Esophagus muscularis mucosa (tissue), 4 donors: ENCODE measurements at regions of chr3 and their contacts with region 1.

Region 1: DNA sequence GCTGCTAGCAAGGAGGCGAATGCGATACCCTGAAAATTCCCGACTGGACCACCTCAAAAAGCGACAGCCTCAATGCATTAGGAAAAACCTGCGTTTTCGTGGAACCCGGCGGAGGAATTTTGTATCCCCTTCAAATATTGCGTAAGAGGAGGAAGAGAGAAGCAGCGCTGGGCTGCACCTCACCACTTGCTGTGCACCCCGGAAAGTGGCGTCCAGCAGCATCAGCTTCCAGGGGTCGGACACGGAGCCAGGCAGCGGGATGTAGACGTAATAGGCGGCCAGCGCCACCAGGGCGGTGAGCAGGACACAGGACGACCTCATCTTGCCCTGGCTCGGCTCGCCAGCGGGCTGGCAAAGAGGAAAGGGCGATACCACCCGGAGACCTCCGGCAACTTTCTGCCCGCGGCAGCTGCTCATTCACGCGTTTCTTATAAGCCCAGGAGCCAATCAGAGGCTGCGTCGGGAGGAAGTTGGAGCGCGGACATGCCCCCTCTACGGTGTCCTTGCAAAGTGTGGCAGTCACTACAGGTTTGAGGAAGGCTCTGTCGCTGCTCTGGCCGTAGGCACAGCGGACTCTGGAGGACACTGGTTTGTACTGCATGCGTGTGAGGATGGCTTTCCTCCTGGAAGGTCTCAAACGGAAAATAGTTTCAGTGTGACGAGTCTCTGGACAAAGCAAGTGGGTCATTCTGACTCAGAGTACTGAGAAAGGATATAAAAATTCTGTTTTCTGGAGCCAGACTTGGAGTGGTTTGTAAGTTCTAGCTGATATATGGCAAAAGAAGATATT is at the start of gene NCEH1:
- DNase-seq: peak; percentile 96
- H3K4me3 ChIP-seq: peak within 1 kb of the TSS; percentile 76 to 92 (median 84)
- H3K27ac ChIP-seq: peak within 1 kb of the TSS; percentile 90 to 97 (median 93)
- H3K4me1 ChIP-seq: peaks cover 17 to 36% (median 27%) of the 10 kb centered on the region in 4 donors
- H3K27me3 ChIP-seq: no peaks in the 10 kb centered on the region
- CTCF ChIP-seq: peak; percentile 78 to 86 (median 81)
- EP300 ChIP-seq: no peak
- POLR2A ChIP-seq: peak; percentile 57
- total RNA-seq, gene NCEH1: 3.0 to 11.6 (median 3.7) TPM

Region 2: DNA sequence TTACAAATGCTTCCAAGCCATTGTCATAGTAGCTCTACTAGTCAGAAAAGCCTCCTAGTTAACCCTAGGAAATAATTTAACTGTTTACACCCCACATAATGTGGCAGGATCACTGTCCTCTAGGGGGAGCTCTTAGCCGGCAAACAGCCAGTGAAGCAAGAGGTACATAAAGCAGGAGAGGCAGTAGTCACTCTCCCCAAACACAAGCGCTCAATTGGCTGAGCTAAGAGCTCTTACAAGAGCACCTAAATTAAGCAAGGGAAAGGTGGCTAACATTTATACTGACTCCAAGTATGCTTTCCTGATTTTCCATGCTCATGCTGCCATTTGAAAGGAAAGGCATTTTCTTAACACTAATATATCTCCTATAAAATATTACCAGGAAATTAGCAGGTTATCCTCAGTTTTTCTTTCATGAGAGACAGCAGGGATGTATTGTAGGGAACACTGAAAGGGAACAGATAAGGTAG is 37.6 kb before region 1 on chr3:
- intact Hi-C with region 1: loop called (anchors 5 kb)
- DNase-seq: no peak
- H3K4me3 ChIP-seq: no peak overlapping the region
- H3K27ac ChIP-seq: no peak overlapping the region
- H3K4me1 ChIP-seq: peaks cover 30 to 58% (median 41%) of the 10 kb centered on the region in 4 donors
- H3K27me3 ChIP-seq: no peaks in the 10 kb centered on the region
- CTCF ChIP-seq: peak; percentile 65 to 75 (median 67)
- EP300 ChIP-seq: no peak
- POLR2A ChIP-seq: no peak